Heart right ventricle (tissue), 16 donors: ENCODE measurements at regions of chr6 and their contacts with region 1.

Region 1: GRCh38 chr6:34717466-34717865 is 20.9 kb upstream of the ILRUN start:
- DNase-seq: no peak
- ATAC-seq: no peak
- H3K4me3 ChIP-seq: no peak overlapping the region
- H3K27ac ChIP-seq: no peak overlapping the region
- H3K4me1 ChIP-seq: no peaks in the 10 kb centered on the region
- H3K27me3 ChIP-seq: no peaks in the 10 kb centered on the region
- CTCF ChIP-seq: no peak

Region 2: DNA sequence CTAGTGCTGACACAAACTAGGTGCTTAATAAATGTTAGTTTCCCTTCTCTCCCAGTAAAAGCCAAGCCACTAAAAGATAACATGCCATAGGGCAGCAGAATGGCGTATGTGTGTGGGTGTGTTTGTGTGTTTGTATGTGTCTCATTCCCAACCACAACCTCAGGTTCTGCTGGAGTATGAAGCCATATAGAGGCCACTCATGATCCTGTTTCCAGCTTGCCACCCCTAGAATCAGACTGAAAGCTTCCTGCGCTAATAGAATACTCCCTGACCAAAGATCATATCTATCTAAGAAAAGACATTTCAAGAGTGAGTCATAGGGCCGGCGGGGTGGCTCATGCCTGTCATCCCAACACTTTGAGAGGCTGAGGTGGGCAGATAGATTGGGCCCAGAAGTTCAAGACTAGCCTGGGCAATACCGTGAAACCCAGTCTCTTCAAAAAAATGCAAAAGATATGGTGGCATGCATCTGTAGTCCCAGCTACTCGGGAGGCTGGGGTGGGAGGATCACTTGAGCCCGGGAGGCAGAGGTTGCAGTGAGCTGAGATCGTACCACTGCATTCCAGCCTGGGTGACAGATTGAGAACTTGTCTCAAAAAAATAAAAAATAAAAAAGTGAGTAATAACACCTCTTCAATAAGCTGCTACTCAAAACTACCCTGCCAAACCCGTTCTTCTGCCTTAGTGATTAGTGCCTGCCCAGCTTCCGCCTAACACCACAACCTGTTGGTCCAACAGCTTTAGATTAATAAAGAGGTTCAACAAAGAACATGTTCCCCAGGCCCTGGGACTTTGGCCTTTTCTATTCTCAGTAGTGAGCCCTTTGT is 28.0 kb after region 1 on chr6:
- intact Hi-C with region 1: loop called in 1 of 10 experiments (anchors 5 kb)
- DNase-seq: no peak
- ATAC-seq: no peak
- H3K4me3 ChIP-seq: no peak overlapping the region
- H3K27ac ChIP-seq: no peak overlapping the region
- H3K4me1 ChIP-seq: no peaks in the 10 kb centered on the region
- H3K27me3 ChIP-seq: no peaks in the 10 kb centered on the region
- CTCF ChIP-seq: no peak